PC-3 (cell line): ENCODE measurements at regions of chr5 and their contacts with region 1.

Region 1: GRCh38 chr5:54944364-54944763 is 41.0 kb downstream of the ESM1 start:
- DNase-seq: peak; percentile 40
- ATAC-seq: peak; percentile 53
- H3K4me3 ChIP-seq: no peak overlapping the region
- H3K27ac ChIP-seq: no peak overlapping the region
- H3K4me1 ChIP-seq: no peaks in the 10 kb centered on the region
- H3K27me3 ChIP-seq: no peaks in the 10 kb centered on the region
- CTCF ChIP-seq: peak; percentile 66

Region 2: DNA sequence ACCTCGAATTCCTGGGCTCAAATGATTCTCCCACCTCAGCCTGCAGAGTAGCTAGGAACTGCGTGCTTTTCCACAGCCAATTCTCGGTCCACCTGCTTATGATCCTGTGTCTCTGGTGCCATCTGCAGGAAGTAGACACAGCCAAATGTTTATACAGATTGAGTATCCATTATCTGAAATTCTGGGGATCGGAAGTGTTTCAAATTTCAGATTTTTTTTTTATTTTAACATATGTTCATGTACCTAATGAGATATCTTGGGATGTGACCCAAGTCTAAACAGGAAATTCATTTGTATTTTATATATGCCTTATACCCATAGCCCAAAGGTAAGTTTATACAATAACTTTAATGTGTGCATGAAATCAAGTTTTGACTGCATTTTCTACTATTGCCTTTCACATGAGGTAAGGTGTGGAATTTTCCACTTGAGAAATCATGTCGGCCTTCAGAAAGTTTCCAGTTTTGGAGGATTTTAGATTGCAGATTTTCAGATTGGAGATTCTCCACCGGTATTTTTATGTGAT is 48.5 kb before region 1 on chr5:
- CTCF ChIA-PET with region 1: no interaction called
- POLR2A ChIA-PET with region 1: no interaction called
- intact Hi-C with region 1: no loop called
- DNase-seq: peak; percentile 59
- ATAC-seq: peak; percentile 68
- H3K4me3 ChIP-seq: no peak overlapping the region
- H3K27ac ChIP-seq: no peak overlapping the region
- H3K4me1 ChIP-seq: no peaks in the 10 kb centered on the region
- H3K27me3 ChIP-seq: no peaks in the 10 kb centered on the region
- CTCF ChIP-seq: peak; percentile 60

Region 3: GRCh38 chr5:55146543-55147151 is 202.3 kb after region 1 on chr5:
- CTCF ChIA-PET with region 1: interaction called, 6 read pairs
- POLR2A ChIA-PET with region 1: no interaction called
- intact Hi-C with region 1: loop called (anchors 1 kb)
- DNase-seq: peak; percentile 83
- ATAC-seq: peak; percentile 97
- H3K4me3 ChIP-seq: no peak overlapping the region
- H3K27ac ChIP-seq: no peak overlapping the region
- H3K4me1 ChIP-seq: peaks cover 2% of the 10 kb centered on the region
- H3K27me3 ChIP-seq: no peaks in the 10 kb centered on the region
- CTCF ChIP-seq: peak; percentile 76

Region 4: DNA sequence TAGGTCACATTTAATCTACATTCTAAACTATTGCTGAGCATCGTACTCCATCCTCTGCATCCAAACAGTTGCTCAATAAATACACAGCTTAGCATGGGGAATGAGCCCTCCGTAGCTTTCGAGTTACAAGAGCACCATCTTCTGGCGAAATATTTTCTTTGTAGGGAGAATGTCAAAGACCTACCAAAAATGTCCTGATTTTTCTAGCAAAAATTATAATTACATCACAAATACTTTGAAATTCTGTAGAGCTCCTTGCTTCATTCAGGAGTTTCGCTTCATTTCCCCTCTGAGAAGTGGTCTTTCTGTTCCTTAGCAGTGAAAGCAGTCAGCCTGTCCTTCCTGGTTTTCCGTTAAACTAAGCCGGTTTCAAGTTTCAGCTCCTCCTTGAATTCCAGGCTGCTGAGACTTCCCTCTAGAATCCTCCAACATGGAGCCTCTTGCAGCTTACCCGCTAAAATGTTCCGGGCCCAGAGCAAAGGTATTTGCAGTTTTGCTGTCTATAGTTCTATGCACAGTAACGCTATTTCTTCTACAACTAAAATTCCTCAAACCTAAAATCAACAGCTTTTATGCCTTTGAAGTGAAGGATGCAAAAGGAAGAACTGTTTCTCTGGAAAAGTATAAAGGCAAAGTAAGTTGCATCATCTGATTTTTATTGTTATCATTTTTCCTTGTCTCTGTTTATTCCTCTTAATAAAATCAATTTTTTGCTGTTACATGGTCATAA is 215.6 kb after region 1 on chr5 and contains the start of gene GPX8:
- CTCF ChIA-PET with region 1: interaction called, 26 read pairs
- POLR2A ChIA-PET with region 1: no interaction called
- intact Hi-C with region 1: loop called (anchors 1 kb)
- DNase-seq: peak; percentile 72
- ATAC-seq: peak; percentile 91
- H3K4me3 ChIP-seq: peak within 1 kb of the TSS; percentile 91
- H3K27ac ChIP-seq: peak within 1 kb of the TSS; percentile 54
- H3K4me1 ChIP-seq: peaks cover 12% of the 10 kb centered on the region
- H3K27me3 ChIP-seq: no peaks in the 10 kb centered on the region
- CTCF ChIP-seq: peak; percentile 88
- total RNA-seq, gene GPX8: 13.0 and 18.3 TPM in 2 replicates